ENCODE measurements at regions of chr11 and their contacts with region 1.

Region 1: DNA sequence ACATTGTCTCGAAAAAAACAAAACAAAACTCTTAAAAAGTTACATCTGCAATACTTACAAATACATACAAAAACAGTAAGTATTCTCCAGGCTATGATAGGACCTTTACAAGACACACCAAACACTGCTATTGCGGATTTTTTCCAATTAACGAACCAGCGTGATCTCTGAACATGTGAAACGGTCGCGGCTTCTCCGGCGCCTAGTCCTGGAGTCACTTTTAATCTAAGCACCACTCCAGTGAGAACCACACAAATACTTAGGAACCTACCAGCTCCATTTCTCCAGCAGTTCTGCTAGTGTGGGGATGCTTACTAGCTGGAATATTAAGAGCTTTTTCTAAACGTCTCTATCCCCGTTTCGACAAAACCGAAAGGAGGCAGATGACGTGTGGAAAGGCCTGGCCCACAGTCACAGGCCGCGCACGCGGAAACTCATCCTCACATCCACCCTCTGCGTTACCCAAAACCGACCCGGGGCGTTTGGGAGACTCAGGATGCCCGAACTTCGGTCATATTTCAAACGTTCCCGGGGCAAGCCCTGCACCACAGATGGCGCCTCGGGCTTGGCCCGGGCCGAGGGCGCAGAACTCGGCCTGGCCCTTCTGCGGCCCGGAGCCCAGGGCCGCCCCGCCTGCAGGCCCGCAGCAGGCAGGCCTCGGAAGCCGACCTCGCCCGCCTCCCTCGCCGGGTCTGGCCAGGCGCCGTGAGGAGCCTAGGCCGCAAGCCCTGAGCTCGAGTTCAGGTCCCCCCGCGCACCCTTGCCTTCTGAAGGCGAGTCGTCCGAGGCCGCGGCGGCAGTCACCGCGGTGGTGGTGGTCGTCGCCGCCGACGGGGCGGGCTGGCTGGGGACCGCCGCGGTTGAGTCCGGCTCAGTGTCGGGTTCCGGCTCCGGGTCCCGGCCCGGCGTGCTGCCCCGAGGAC is 575 bp downstream of the FNBP4 start:
- DNase-seq: peak; percentile 76
- H3K4me3 ChIP-seq: peak overlapping the region; percentile 86
- H3K27ac ChIP-seq: peak overlapping the region; percentile 81
- H3K4me1 ChIP-seq: peaks cover 18% of the 10 kb centered on the region
- CTCF ChIP-seq: no peak

Region 2: GRCh38 chr11:47552566-47553416 is 213.8 kb before region 1 on chr11 and contains the start of gene CELF1:
- CTCF ChIA-PET with region 1: no interaction called
- POLR2A ChIA-PET with region 1: no interaction called
- intact Hi-C with region 1: loop called (anchors 1 kb)
- DNase-seq: peak; percentile 96
- H3K4me3 ChIP-seq: peak within 1 kb of the TSS; percentile 89
- H3K27ac ChIP-seq: peak within 1 kb of the TSS; percentile 65
- H3K4me1 ChIP-seq: peaks cover 29% of the 10 kb centered on the region
- CTCF ChIP-seq: peak; percentile 88
- total RNA-seq, gene CELF1: 82.1 and 87.4 TPM in 2 replicates

Region 3: DNA sequence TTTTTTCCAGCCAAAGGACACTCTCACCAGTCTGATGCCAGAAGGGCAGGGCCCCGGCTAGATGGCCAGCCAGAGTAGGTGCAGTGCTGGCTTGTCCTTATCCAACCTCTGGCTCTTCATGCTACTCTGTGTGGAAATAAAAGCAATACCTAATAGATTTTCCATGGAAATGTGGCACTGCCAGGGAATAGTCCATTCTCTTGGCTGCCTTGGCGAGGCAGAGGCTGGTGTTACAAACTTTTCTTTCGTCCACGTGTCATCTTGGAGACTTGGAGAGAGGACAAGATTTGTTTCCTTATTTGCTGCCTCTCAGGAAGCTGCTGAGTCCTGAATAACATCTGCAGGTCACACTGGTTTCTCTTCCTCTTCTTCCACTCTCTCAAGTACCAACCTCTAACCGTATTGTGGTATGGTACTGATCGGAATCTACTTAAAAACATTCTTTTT is 155.2 kb before region 1 on chr11:
- CTCF ChIA-PET with region 1: no interaction called
- POLR2A ChIA-PET with region 1: no interaction called
- intact Hi-C with region 1: no loop called
- DNase-seq: peak; percentile 79
- H3K4me3 ChIP-seq: peak overlapping the region; percentile 43
- H3K27ac ChIP-seq: peak overlapping the region; percentile 65
- H3K4me1 ChIP-seq: peaks cover 28% of the 10 kb centered on the region
- CTCF ChIP-seq: no peak

Region 4: GRCh38 chr11:47642099-47642855 is 124.3 kb before region 1 on chr11 and contains the start of gene MTCH2:
- CTCF ChIA-PET with region 1: no interaction called
- POLR2A ChIA-PET with region 1: interaction called, 4 read pairs
- intact Hi-C with region 1: loop called (anchors 2 kb)
- DNase-seq: peak; percentile 98
- H3K4me3 ChIP-seq: peak within 1 kb of the TSS; percentile 89
- H3K27ac ChIP-seq: peak within 1 kb of the TSS; percentile 75
- H3K4me1 ChIP-seq: peaks cover 21% of the 10 kb centered on the region
- CTCF ChIP-seq: 0 out of 2 replicates have a peak, but pooled peaks have one; percentile 43
- total RNA-seq, gene MTCH2: 43.6 and 64.8 TPM in 2 replicates

Region 5: GRCh38 chr11:47847892-47848635 is 81.5 kb after region 1 on chr11 and contains the start of gene NUP160:
- CTCF ChIA-PET with region 1: no interaction called
- POLR2A ChIA-PET with region 1: interaction called, 4 read pairs
- intact Hi-C with region 1: loop called (anchors 2 kb)
- DNase-seq: peak; percentile 76
- H3K4me3 ChIP-seq: peak within 1 kb of the TSS; percentile 94
- H3K27ac ChIP-seq: peak within 1 kb of the TSS; percentile 59
- H3K4me1 ChIP-seq: peaks cover 50% of the 10 kb centered on the region
- CTCF ChIP-seq: no peak
- total RNA-seq, gene NUP160: 23.9 and 32.0 TPM in 2 replicates

Region 6: DNA sequence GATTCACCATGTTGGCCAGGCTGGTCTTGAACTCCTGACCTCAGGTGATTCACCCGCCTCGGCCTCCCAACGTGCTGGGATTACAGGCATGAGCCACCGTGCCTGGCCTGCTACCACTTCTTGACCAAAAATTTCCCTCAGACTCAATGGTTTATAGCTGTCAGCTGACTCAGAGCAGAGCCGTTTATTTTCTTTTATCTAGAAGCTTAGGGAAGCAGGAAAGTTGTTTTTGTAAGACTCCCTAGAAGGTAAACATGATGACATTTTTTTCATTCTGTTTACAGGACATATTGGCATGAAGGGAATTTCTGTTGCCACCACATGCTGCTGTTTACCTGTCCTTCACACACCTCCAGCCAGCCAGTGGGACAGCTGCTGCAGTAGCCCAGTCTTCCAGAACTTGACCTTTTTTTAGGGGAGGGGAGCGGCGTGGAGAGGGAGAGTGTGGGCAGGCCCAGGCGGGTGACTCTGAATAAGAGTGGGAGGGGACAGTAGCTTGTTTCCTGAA is 157.7 kb after region 1 on chr11:
- CTCF ChIA-PET with region 1: no interaction called
- POLR2A ChIA-PET with region 1: interaction called, 4 read pairs
- intact Hi-C with region 1: loop called (anchors 10 kb)
- DNase-seq: no peak
- H3K4me3 ChIP-seq: no peak overlapping the region
- H3K27ac ChIP-seq: no peak overlapping the region
- H3K4me1 ChIP-seq: peaks cover 32% of the 10 kb centered on the region
- CTCF ChIP-seq: no peak

Region 7: DNA sequence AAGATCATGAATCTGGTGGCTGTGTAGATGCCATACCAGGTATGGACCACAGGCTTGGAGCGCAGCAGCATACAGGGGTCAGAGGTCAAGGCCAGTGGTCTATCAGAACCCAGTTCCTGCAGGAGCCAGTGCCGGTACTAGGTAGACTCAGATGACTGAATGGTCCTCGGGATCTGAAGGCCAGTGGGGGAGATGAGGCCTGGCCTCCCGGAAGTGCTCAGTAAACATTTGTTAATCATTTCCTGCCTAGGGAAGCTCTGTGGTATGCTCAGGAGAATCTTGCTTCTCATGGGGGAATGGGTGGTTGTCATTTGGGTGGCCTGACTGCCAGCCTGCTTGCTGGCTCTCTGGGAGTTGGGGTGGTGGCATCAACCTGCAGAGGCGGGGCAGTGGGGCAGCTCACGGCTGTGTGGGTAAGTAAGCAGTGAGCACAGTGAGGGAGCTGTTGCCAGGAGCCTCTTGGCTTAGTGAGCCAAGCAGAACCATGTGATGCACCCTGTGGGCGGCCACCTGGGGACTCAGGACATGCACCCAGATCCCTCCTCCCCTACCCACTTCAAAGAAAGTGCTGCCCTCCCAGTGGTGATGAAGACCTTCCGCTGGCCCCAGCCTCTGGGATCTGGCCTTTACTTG is 246.8 kb after region 1 on chr11:
- CTCF ChIA-PET with region 1: no interaction called
- POLR2A ChIA-PET with region 1: no interaction called
- intact Hi-C with region 1: loop called (anchors 10 kb)
- DNase-seq: peak; percentile 81
- H3K4me3 ChIP-seq: peak overlapping the region; percentile 8
- H3K27ac ChIP-seq: peak overlapping the region; percentile 55
- H3K4me1 ChIP-seq: peaks cover 77% of the 10 kb centered on the region
- CTCF ChIP-seq: no peak